ENCODE measurements at regions of chr1 and their contacts with region 1.

Region 1: DNA sequence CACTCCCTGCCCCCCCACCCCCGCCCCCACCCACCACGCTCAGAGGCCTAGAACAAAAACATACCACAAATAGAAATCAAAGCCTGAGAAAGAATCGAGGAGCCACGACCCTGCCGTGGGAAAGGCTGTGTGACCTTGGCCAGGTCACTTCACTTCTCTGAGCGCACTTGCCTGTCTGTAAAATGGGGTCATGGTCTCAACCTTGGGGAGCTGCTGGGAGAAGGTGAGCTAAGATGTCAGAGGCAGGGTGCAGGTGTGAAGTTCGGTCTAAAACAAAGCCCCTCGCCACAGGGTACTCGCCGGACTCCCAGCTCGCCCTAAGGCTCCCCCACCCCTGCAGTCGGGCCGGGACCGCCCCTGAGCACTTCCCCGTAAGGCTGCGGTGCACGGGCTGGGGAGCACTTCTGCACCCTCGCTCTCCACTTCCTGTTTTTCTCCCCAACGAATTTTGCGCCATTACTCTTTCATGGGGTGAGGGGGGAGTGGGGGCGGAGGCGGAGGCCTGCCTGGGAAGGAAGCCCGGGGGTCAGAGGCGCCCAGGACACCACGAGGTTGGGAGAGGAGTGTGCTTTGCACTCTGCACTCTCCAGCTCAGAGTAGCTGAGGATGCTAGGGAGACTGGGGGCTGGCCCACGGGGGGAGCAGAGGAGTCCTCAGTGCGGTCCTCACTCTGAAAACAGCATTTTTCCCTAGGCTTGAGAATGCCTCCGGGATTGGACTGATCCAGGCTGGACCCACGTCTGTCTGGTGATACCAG is 21.9 kb upstream of the PIK3CD start:
- DNase-seq: peak; percentile 50 to 92 (median 83)
- ATAC-seq: peak; percentile 42
- H3K4me3 ChIP-seq: peak overlapping the region; percentile 85 to 98
- H3K4me3 Mint-ChIP-seq: peak overlapping the region; percentile 98
- H3K27ac ChIP-seq: peak overlapping the region; percentile 79 to 81
- H3K27ac Mint-ChIP-seq: peak overlapping the region; percentile 98
- H3K4me1 ChIP-seq: peaks cover 66% of the 10 kb centered on the region
- H3K4me1 Mint-ChIP-seq: peaks cover 68% of the 10 kb centered on the region
- H3K27me3 ChIP-seq: no peaks in the 10 kb centered on the region
- H3K27me3 Mint-ChIP-seq: no peaks in the 10 kb centered on the region
- CTCF ChIP-seq: no peak

Region 2: GRCh38 chr1:9588551-9589143 is 41.0 kb before region 1 on chr1 and contains the start of gene TMEM201:
- CTCF ChIA-PET with region 1: interaction called, 6 read pairs
- POLR2A ChIA-PET with region 1: no interaction called
- intact Hi-C with region 1: loop called in 1 of 2 experiments (anchors 2 kb)
- DNase-seq: peak; percentile 87 to 97 (median 95)
- ATAC-seq: peak; percentile 94
- H3K4me3 ChIP-seq: peak within 1 kb of the TSS; percentile 53 to 59
- H3K4me3 Mint-ChIP-seq: peak within 1 kb of the TSS; percentile 88
- H3K27ac ChIP-seq: peak within 1 kb of the TSS; percentile 21 to 32
- H3K27ac Mint-ChIP-seq: peak within 1 kb of the TSS; percentile 74
- H3K4me1 ChIP-seq: peaks cover 22% of the 10 kb centered on the region
- H3K4me1 Mint-ChIP-seq: peaks cover 24% of the 10 kb centered on the region
- H3K27me3 ChIP-seq: no peaks in the 10 kb centered on the region
- H3K27me3 Mint-ChIP-seq: no peaks in the 10 kb centered on the region
- CTCF ChIP-seq: peak; percentile 77
- total RNA-seq, gene TMEM201: 10.7 to 11.5 TPM

Region 3: DNA sequence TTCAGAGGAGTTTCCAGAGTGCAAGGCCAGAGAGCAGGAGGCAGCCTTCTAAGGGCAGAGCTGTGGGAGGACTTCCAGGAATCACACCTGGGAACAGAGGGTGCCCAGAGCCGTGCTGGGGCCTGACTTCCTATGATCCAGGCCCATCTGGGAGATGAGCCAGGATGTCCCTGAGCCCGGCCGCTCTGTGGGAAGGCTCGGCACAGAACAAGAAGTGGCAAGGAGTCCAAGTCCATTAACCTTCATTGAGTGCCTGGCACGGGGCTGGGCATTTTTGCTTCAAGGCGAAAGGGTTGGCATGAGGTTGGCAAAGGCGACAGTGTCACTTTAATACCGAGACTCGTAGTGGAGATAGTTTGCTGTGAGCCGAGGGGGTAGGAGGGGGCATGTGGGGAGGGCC is 22.7 kb before region 1 on chr1:
- CTCF ChIA-PET with region 1: no interaction called
- POLR2A ChIA-PET with region 1: no interaction called
- intact Hi-C with region 1: no loop called
- DNase-seq: no peak
- ATAC-seq: no peak
- H3K4me3 ChIP-seq: no peak overlapping the region
- H3K4me3 Mint-ChIP-seq: no peak overlapping the region
- H3K27ac ChIP-seq: no peak overlapping the region
- H3K27ac Mint-ChIP-seq: no peak overlapping the region
- H3K4me1 ChIP-seq: no peaks in the 10 kb centered on the region
- H3K4me1 Mint-ChIP-seq: no peaks in the 10 kb centered on the region
- H3K27me3 ChIP-seq: no peaks in the 10 kb centered on the region
- H3K27me3 Mint-ChIP-seq: no peaks in the 10 kb centered on the region
- CTCF ChIP-seq: no peak

Region 4: DNA sequence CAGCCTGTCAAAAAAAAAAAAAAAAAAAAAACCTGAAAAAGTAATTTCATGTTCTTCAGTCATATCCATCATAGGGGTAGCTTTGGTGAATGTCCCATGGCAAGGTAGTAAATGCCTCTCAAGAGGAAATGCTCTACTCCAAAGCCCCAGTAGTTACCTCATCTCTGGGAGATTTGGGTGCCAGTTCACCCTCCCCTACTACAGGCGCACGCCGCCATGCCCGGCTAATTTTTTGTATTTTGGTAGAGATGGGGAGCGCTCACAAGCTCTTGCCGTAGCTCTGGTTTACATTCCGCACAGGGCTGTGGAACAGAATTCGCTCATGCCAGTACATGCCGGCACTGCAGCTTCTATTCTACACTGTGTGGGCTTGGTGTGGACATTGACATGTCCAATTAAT is 35.6 kb after region 1 on chr1:
- CTCF ChIA-PET with region 1: interaction called, 47 read pairs
- POLR2A ChIA-PET with region 1: interaction called, 38 read pairs
- intact Hi-C with region 1: no loop called
- DNase-seq: peak in 2 of 9 experiments; percentile 33 to 35
- ATAC-seq: peak; percentile 53
- H3K4me3 ChIP-seq: no peak overlapping the region
- H3K4me3 Mint-ChIP-seq: peak overlapping the region; percentile 41
- H3K27ac ChIP-seq: no peak overlapping the region
- H3K27ac Mint-ChIP-seq: peak overlapping the region; percentile 78
- H3K4me1 ChIP-seq: peaks cover 55% of the 10 kb centered on the region
- H3K4me1 Mint-ChIP-seq: peaks cover 57% of the 10 kb centered on the region
- H3K27me3 ChIP-seq: no peaks in the 10 kb centered on the region
- H3K27me3 Mint-ChIP-seq: no peaks in the 10 kb centered on the region
- CTCF ChIP-seq: no peak

Region 5: DNA sequence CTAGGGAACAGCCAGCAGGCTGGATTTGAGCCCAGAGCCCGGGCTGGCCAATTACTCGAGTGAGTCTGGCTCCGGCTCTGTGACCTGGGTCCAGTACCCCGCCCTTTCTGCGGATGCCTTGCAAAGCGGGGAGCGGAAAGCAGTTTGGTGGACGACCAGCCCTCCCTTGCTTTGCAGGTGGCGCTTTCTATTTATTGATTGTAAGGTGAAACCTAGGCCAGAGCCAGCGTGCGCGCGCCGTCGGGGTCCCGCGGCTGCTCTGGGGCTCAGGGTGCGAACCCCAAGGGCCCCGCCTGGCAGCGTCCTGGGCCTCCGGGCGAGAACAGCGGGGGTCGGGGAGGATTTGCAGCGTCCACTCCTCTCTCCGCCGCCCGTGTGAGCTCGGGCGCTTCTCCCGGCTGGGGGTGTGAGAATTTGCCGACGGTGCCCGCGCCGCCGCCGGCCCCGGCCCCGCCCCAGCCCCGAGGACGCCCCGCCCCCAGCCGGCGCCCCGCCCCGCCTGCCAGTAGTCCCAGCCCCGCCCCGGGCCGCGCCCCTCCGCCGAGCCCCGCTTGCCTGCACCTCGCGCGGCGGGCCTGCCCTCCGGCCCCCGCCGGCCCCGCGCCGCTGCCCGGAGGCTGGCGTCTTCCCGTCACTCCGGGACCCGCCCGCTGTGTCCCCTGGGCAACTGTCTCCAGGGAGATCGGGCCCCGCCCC is 59.5 kb after region 1 on chr1:
- CTCF ChIA-PET with region 1: interaction called, 41 read pairs
- POLR2A ChIA-PET with region 1: interaction called, 32 read pairs
- intact Hi-C with region 1: loop called (anchors 1 kb)
- DNase-seq: peak; percentile 67 to 91 (median 84)
- ATAC-seq: peak; percentile 77
- H3K4me3 ChIP-seq: peak overlapping the region; percentile 55 to 72
- H3K4me3 Mint-ChIP-seq: peak overlapping the region; percentile 81
- H3K27ac ChIP-seq: peak overlapping the region; percentile 33 to 78
- H3K27ac Mint-ChIP-seq: peak overlapping the region; percentile 82
- H3K4me1 ChIP-seq: peaks cover 77% of the 10 kb centered on the region
- H3K4me1 Mint-ChIP-seq: peaks cover 69% of the 10 kb centered on the region
- H3K27me3 ChIP-seq: no peaks in the 10 kb centered on the region
- H3K27me3 Mint-ChIP-seq: no peaks in the 10 kb centered on the region
- CTCF ChIP-seq: no peak

Region 6: DNA sequence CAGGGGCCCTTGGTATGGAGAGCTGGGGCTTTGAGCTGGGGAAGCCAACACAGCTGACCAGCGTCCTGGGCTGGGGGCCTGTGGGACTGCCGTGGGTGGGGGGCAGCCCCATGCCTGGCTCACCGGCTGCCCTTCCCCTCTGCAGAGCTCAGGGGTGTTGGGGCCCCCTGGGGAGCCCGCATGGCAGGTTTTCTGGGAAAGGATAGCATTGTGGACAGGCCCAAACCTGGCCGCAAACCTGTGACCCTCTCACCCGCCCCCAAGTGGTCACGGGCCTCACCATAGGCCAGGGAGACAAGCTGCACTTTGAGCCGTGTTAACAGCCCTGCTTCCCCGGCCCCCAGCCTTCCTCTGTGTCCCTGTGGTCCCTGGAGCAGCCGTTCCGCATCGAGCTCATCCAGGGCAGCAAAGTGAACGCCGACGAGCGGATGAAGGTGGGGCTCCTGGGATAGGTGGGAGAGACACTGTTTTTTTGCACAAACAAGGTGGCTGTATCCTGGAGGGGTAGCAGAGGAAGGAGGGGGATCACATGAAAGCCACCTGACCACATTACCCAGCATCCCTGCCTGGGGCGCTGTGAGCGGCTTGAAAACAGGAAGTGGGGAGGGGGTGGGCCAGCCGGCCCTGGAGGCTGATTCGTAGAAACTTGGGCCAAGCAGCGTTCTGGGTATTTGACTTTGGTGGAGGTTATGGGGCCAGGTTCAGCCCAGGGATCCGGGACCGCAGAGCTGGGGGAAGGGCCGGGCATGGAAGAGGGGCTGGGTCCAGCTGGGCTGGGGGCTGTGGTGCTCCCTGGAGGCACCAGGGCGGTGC is 87.8 kb after region 1 on chr1:
- CTCF ChIA-PET with region 1: interaction called, 319 read pairs
- POLR2A ChIA-PET with region 1: interaction called, 323 read pairs
- intact Hi-C with region 1: loop called (anchors 1 kb)
- DNase-seq: peak; percentile 82 to 96 (median 91)
- ATAC-seq: peak; percentile 70
- H3K4me3 ChIP-seq: peak overlapping the region; percentile 74 to 76
- H3K4me3 Mint-ChIP-seq: peak overlapping the region; percentile 91
- H3K27ac ChIP-seq: peak overlapping the region; percentile 81
- H3K27ac Mint-ChIP-seq: peak overlapping the region; percentile 92
- H3K4me1 ChIP-seq: peaks cover 90% of the 10 kb centered on the region
- H3K4me1 Mint-ChIP-seq: peaks cover 75% of the 10 kb centered on the region
- H3K27me3 ChIP-seq: no peaks in the 10 kb centered on the region
- H3K27me3 Mint-ChIP-seq: no peaks in the 10 kb centered on the region
- CTCF ChIP-seq: no peak

Region 7: DNA sequence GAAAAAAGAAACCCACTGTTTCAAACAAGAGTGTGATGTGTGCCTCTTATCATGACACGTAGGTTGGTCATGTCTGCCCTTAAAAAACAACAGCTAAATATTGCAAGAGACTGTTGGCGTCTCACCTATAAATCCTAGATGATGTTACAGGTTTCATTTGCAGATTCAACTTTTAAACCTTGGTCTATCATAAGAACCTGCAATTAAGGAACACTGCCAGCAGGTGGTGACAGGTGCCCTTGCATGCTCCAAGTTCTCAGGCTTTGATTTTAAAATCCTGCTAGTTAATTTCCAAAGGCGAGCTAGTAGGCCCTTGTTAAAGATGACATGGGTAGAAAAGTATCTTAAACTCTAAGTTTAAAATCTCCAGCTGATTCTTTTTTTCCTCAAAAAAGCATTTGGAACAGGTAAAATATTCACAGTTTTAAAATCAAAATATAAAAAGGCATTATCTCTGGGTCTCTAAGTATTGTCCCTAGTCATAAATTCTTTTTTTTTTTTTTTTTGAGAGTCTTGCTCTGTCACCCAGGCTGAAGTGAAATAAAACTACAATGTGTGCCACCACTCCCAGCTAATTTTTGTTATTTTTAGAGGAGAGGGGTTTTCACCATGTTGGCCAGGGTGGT is 155.0 kb after region 1 on chr1:
- CTCF ChIA-PET with region 1: interaction called, 10 read pairs
- POLR2A ChIA-PET with region 1: no interaction called
- intact Hi-C with region 1: loop called in 1 of 2 experiments (anchors 1 kb)
- DNase-seq: peak; percentile 36 to 84 (median 66)
- ATAC-seq: peak; percentile 54
- H3K4me3 ChIP-seq: no peak overlapping the region
- H3K4me3 Mint-ChIP-seq: no peak overlapping the region
- H3K27ac ChIP-seq: no peak overlapping the region
- H3K27ac Mint-ChIP-seq: no peak overlapping the region
- H3K4me1 ChIP-seq: peaks cover 20% of the 10 kb centered on the region
- H3K4me1 Mint-ChIP-seq: peaks cover 33% of the 10 kb centered on the region
- H3K27me3 ChIP-seq: no peaks in the 10 kb centered on the region
- H3K27me3 Mint-ChIP-seq: no peaks in the 10 kb centered on the region
- CTCF ChIP-seq: peak; percentile 80

Region 8: DNA sequence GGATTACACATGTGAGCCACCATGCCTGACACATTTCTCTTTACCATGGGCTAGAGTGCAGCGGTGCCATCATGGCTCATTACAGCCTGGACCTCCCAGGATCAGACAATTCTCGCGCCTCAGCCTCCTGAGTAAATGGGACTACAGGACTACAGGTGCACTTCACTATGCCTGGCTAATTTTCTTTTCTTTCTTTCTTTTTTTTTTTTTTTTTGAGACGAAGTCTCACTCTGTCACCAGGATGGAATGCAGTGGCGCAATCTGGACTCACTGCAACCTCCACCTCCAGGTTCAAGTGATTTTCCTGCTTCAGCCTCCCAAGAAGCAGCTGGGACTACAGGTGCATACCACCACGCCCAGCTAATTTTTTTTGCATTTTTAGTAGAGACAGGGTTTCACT is 565.9 kb after region 1 on chr1:
- CTCF ChIA-PET with region 1: no interaction called
- POLR2A ChIA-PET with region 1: no interaction called
- intact Hi-C with region 1: no loop called
- DNase-seq: no peak
- ATAC-seq: no peak
- H3K4me3 ChIP-seq: no peak overlapping the region
- H3K4me3 Mint-ChIP-seq: no peak overlapping the region
- H3K27ac ChIP-seq: no peak overlapping the region
- H3K27ac Mint-ChIP-seq: no peak overlapping the region
- H3K4me1 ChIP-seq: no peaks in the 10 kb centered on the region
- H3K4me1 Mint-ChIP-seq: no peaks in the 10 kb centered on the region
- H3K27me3 ChIP-seq: no peaks in the 10 kb centered on the region
- H3K27me3 Mint-ChIP-seq: peaks cover 10% of the 10 kb centered on the region
- CTCF ChIP-seq: no peak